ENCODE measurements at regions of chr3 and their contacts with region 1.

Region 1: GRCh38 chr3:184371570-184372018 is 6.4 kb downstream of the THPO start:
- DNase-seq: peak; percentile 92
- H3K4me3 ChIP-seq: no peak overlapping the region
- H3K27ac ChIP-seq: no peak overlapping the region
- H3K4me1 ChIP-seq: peaks cover 11% of the 10 kb centered on the region
- H3K27me3 ChIP-seq: peaks cover 7% of the 10 kb centered on the region
- CTCF ChIP-seq: peak; percentile 89

Region 2: GRCh38 chr3:184405075-184406030 is 33.8 kb after region 1 on chr3:
- CTCF ChIA-PET with region 1: no interaction called
- POLR2A ChIA-PET with region 1: interaction called, 11 read pairs
- intact Hi-C with region 1: no loop called
- DNase-seq: no peak
- H3K4me3 ChIP-seq: no peak overlapping the region
- H3K27ac ChIP-seq: no peak overlapping the region
- H3K4me1 ChIP-seq: no peaks in the 10 kb centered on the region
- H3K27me3 ChIP-seq: peaks cover 9% of the 10 kb centered on the region
- CTCF ChIP-seq: no peak

Region 3: GRCh38 chr3:184469423-184469822 is 97.8 kb after region 1 on chr3:
- CTCF ChIA-PET with region 1: interaction called, 18 read pairs
- POLR2A ChIA-PET with region 1: no interaction called
- intact Hi-C with region 1: loop called (anchors 5 kb)
- DNase-seq: peak; percentile 41
- H3K4me3 ChIP-seq: no peak overlapping the region
- H3K27ac ChIP-seq: no peak overlapping the region
- H3K4me1 ChIP-seq: no peaks in the 10 kb centered on the region
- H3K27me3 ChIP-seq: peaks cover 32% of the 10 kb centered on the region
- CTCF ChIP-seq: peak; percentile 64

Region 4: GRCh38 chr3:184513276-184514170 is 141.9 kb after region 1 on chr3:
- CTCF ChIA-PET with region 1: interaction called, 46 read pairs
- POLR2A ChIA-PET with region 1: no interaction called
- intact Hi-C with region 1: loop called (anchors 1 kb)
- DNase-seq: peak; percentile 89
- H3K4me3 ChIP-seq: peak overlapping the region; percentile 42
- H3K27ac ChIP-seq: no peak overlapping the region
- H3K4me1 ChIP-seq: no peaks in the 10 kb centered on the region
- H3K27me3 ChIP-seq: peaks cover 88% of the 10 kb centered on the region
- CTCF ChIP-seq: peak; percentile 83

Region 5: DNA sequence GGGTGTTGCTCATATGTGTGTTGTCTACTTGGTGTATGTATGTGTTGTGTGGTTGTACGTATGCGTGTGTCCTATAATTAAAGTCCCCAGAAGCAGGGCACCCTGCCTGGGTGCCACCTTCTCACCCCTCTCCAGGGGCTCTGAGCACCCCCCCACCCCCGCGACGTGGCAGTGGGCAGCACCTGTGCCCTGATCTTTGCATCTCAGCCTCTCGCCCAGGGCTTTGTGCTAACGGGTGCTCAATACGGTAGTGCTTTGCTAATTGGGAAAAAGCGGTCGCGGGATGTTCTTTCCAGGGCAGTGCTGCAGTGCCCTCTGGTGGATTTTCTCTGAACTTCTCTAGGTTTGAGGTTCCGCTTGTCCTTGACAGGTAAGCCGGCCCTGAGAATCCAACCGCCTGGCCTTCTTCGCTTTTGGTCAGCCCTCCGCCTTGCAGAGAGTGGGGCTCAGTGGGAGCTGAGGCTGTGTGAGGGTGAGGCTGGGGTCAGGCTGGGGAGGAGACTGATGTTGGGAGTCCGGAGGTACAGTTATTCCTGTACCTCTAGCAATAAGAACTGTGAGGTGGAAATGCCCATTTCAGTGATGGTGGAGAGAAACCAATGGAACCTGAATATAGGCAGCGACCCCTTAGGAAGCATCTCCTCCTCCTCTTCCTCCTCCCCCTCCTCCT is 172.4 kb after region 1 on chr3:
- CTCF ChIA-PET with region 1: interaction called, 20 read pairs
- POLR2A ChIA-PET with region 1: no interaction called
- intact Hi-C with region 1: loop called (anchors 2 kb)
- DNase-seq: peak; percentile 87
- H3K4me3 ChIP-seq: no peak overlapping the region
- H3K27ac ChIP-seq: no peak overlapping the region
- H3K4me1 ChIP-seq: no peaks in the 10 kb centered on the region
- H3K27me3 ChIP-seq: peaks cover 4% of the 10 kb centered on the region
- CTCF ChIP-seq: peak; percentile 91

Region 6: GRCh38 chr3:184786280-184786941 is 414.8 kb after region 1 on chr3:
- CTCF ChIA-PET with region 1: no interaction called
- POLR2A ChIA-PET with region 1: no interaction called
- intact Hi-C with region 1: loop called (anchors 10 kb)
- DNase-seq: peak; percentile 76
- H3K4me3 ChIP-seq: no peak overlapping the region
- H3K27ac ChIP-seq: peak overlapping the region; percentile 71
- H3K4me1 ChIP-seq: peaks cover 29% of the 10 kb centered on the region
- H3K27me3 ChIP-seq: no peaks in the 10 kb centered on the region
- CTCF ChIP-seq: no peak

Region 7: DNA sequence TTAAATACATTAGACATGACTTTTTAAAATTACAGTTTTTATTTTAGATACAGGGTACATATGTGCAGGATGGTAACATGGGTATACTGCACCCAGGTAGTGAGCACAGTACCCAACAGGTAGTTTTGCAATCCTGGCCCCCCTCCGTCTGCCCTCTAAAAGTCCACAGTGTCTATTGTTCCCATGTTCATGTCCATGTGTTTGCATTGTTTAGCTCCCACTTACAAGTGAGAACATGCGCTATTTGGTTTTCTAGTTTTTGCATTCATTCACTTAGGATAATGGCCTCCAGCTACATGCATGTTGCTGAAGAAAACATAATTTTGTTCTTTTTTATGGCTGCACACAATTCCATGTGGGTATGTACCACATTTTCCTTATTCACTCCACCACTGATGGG is 757.5 kb after region 1 on chr3:
- CTCF ChIA-PET with region 1: no interaction called
- POLR2A ChIA-PET with region 1: no interaction called
- intact Hi-C with region 1: no loop called
- DNase-seq: no peak
- H3K4me3 ChIP-seq: no peak overlapping the region
- H3K27ac ChIP-seq: no peak overlapping the region
- H3K4me1 ChIP-seq: no peaks in the 10 kb centered on the region
- H3K27me3 ChIP-seq: no peaks in the 10 kb centered on the region
- CTCF ChIP-seq: no peak